ENCODE measurements at regions of chr2 and their contacts with region 1.

Region 1: DNA sequence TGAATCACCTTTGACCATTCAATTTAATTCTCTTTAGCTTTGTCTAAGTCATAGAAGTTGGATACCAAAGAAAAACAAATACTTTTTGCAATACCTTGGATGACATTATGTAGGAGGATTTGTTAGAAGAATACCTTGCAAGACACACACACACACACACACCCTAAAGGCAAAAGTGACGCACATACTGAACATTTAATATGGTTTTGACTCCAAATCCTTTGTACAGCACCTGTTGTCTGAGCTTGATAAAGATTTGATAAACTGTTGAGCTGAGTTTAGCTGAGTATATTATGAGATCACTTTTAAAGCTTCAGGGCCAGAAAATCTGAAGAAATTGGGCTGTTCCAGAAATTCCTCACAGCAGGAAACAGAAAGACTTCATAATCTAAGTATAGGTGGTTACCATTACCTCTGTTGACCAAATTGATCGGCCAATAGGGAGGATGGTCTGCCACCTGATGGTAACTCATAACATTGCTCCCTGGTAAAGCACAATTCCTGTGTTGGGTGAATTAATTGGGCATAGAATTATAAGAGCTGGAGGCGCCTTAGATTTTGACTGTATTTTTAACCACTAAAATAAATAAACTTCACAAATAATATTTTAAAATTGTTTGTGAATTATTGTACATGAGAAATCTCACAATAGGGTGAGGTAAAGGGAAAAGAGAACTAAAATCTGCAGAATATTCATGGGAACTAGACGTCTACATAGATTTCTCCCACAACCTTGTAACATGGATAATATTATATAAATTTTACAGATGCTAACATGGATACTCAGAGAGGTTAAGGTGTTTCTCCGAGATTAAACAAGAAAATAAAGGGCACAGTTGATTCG is 21.9 kb upstream of the RPIA start:
- DNase-seq: peak; percentile 60
- CTCF ChIP-seq: peak; percentile 78

Region 2: GRCh38 chr2:88398180-88398579 is 271.4 kb before region 1 on chr2:
- in situ Hi-C with region 1: loop called (anchors 25 kb)
- DNase-seq: no peak
- CTCF ChIP-seq: no peak

Region 3: DNA sequence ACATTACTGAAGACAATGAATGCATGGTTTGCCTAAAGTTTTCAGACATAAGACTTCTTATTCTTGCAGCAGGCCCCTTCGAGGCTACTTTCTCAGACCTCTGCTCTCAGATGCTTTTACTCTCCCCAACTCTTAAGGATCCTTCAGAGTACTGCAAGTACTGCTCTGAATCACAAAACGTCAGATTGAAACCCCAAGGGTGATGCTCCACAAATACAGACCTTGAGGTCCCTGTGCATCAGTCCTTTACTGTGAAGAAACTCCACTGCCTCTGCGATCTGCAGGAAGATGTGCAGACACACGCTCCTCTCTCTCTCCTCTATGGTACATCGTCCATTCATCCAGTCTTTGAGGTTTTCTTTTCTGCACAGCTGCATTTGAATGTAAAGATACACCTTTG is 95.1 kb before region 1 on chr2:
- in situ Hi-C with region 1: loop called (anchors 10 kb)
- DNase-seq: peak; percentile 25
- CTCF ChIP-seq: no peak

Region 4: DNA sequence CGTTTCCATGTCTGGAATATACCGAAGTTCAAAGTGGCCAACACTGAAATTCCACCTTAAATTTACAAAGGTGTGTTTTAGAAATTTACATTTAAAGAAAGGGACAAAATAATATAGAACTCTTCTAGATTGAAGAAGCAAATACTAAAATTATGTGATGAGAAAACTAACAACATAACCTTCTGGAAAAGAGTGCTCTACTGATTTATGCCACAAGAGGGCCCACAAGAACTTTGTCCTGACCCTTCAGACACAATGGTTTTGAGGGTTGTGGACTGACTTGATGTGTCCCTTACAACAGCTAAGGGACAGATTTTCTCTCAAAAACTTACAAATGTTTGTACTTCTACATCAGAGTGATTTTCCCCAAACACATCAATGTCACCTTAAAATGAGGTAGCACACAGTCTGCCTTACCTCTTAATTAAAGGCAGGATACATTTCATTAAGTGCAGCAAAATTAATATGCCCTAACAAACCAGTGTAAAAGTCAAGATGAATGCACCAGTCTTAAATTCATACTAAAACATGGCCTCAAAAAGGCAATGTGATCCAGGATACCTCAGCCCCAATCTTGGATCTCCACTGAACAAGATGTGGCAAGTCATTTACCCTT is 78.5 kb before region 1 on chr2:
- in situ Hi-C with region 1: loop called (anchors 5 kb)
- DNase-seq: peak; percentile 39
- CTCF ChIP-seq: peak; percentile 75

Measured in GM13977 (cell line).